SK-N-SH (cell line): ENCODE measurements at regions of chr1 and their contacts with region 1.

Region 1: DNA sequence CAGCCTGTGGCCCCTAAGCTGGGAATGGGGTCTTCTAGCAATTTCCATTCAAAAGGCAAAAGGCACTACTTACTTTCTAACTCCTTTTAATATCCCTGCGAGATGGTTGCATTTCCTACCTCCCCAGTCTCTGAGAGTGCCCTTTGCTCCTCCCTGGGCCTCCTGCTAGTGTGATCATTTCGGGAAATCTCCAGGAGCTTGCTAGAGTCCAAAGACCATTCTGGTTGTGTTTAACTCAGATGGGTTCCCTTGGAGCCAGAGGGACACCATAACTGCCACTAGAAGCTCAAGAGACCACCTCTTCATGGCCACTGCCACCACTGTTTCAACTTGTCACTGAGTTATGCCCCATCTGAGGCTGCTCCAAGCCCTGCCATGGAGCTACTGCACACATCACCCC is 34.4 kb upstream of the CYP4B1 start:
- DNase-seq: no peak
- H3K4me3 ChIP-seq: no peak overlapping the region
- H3K27ac ChIP-seq: no peak overlapping the region
- H3K4me1 ChIP-seq: no peaks in the 10 kb centered on the region
- H3K27me3 ChIP-seq: peaks cover under 1% of the 10 kb centered on the region; the same call in 1 of the 2 replicates
- CTCF ChIP-seq: no peak
- EP300 ChIP-seq: no peak
- RAD21 ChIP-seq: no peak

Region 2: GRCh38 chr1:46595127-46595526 is 169.3 kb before region 1 on chr1:
- CTCF ChIA-PET with region 1: no interaction called
- POLR2A ChIA-PET with region 1: no interaction called
- DNase-seq: no peak
- H3K4me3 ChIP-seq: no peak overlapping the region
- H3K27ac ChIP-seq: no peak overlapping the region
- H3K4me1 ChIP-seq: no peaks in the 10 kb centered on the region
- H3K27me3 ChIP-seq: no peaks in the 10 kb centered on the region
- CTCF ChIP-seq: no peak
- EP300 ChIP-seq: no peak
- RAD21 ChIP-seq: no peak

Region 3: DNA sequence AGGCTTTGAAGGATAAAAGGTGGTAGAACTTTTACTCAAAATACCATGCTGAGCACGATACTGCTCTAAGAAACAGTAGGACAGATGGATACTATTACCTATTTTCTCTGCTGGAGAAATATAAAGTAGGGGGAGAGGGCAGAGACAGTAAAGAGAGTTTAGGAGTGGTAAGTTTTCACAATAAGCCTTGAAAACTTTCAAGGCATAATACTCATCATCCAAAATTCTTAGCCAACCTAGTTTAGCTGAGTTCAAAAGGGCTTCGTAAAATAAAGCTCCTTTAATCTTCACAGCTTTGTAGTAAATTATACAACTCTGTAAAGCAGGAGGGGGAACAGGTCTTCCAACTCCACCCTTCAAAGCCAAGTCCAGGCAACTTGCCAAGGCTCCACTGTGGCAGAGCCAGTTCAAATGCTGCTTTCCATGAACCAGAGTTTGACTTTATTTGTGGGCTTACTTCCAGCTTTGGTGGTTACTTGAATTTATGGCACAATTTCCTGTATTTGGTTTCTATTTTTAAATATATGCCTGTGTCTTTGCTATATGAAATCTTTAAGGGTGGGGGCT is 77.2 kb before region 1 on chr1:
- CTCF ChIA-PET with region 1: no interaction called
- POLR2A ChIA-PET with region 1: no interaction called
- DNase-seq: no peak
- H3K4me3 ChIP-seq: no peak overlapping the region
- H3K27ac ChIP-seq: peak overlapping the region; percentile 15 to 16; a peak in 3 of 4 replicates
- H3K4me1 ChIP-seq: peaks cover 2 to 41% of the 10 kb centered on the region in 2 experiments
- H3K27me3 ChIP-seq: no peaks in the 10 kb centered on the region
- CTCF ChIP-seq: no peak
- EP300 ChIP-seq: no peak
- RAD21 ChIP-seq: no peak

Region 4: GRCh38 chr1:46724991-46725735 is 39.2 kb before region 1 on chr1:
- CTCF ChIA-PET with region 1: no interaction called
- POLR2A ChIA-PET with region 1: no interaction called
- DNase-seq: peak; percentile 65
- H3K4me3 ChIP-seq: no peak overlapping the region; a peak in 1 of 4 replicates
- H3K27ac ChIP-seq: no peak overlapping the region
- H3K4me1 ChIP-seq: no peaks in the 10 kb centered on the region; a peak in 1 of 4 replicates
- H3K27me3 ChIP-seq: no peaks in the 10 kb centered on the region; the same call in 1 of the 2 replicates
- CTCF ChIP-seq: peak; percentile 84
- EP300 ChIP-seq: no peak
- RAD21 ChIP-seq: peak; percentile 85

Region 5: DNA sequence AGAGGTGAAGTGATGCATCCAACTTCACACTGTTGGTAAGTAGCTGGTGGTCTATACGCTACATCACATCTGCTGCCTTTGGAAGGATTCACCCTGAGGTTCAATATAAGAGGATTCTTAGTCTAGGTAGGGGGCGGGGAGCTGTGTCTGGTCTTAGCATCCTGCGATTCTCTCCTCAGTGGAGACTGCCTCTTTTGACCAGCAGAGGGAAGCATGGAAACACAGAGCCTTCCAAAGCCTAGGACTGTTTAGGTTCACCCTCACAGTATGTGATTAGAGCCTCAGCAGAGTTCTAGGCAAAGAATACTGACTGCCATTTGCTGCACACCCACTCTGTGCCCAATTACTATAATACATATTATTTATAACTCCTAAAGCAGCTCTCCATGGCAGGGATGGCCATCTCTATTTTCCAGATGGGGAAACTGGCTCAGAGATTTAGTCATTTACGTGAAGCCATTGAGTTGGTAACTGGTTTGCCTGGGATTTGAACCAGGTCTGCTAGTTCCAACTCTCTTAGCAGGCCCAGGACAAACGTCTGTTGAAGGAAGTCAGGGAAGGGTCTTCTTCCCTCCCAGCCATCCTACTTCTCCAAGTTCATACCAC is 16.6 kb before region 1 on chr1:
- CTCF ChIA-PET with region 1: interaction called, 13 read pairs
- POLR2A ChIA-PET with region 1: no interaction called
- DNase-seq: peak; percentile 53
- H3K4me3 ChIP-seq: no peak overlapping the region
- H3K27ac ChIP-seq: no peak overlapping the region
- H3K4me1 ChIP-seq: no peaks in the 10 kb centered on the region
- H3K27me3 ChIP-seq: peaks cover 11% of the 10 kb centered on the region
- CTCF ChIP-seq: peak; percentile 65
- EP300 ChIP-seq: no peak
- RAD21 ChIP-seq: peak; percentile 69

Region 6: DNA sequence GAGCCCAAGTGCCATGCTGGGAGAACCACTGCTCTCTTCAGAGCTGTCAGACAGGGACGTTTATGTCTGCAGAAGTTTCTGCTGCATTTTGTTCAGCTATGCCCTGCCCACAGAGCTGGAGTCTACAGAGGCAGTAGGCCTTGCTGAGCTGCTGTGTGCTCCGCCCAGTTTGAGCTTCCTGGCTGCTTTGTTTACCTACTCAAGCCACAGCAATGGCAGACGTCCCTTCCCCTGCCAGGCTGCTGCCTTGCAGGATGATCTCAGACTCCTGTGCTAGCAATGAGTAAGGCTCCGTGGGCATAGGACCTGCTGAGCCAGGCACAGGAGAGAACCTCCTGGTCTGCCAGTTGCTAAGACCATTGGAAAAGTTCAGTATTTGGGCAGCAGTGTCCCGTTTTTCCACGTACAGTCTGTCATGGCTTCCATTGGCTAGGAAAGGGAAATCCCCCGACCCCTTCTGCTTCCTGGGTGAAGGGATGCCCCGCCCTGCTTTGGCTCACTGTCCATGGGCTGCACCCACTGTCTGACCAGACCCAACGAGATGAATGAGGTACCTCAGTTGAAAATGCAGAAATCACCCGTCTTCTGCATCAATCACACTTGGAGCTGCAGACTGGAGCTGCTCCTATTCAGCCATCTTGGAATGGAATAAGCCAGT is 66.4 kb after region 1 on chr1:
- CTCF ChIA-PET with region 1: no interaction called
- POLR2A ChIA-PET with region 1: no interaction called
- DNase-seq: no peak
- H3K4me3 ChIP-seq: no peak overlapping the region
- H3K27ac ChIP-seq: no peak overlapping the region
- H3K4me1 ChIP-seq: no peaks in the 10 kb centered on the region
- H3K27me3 ChIP-seq: no peaks in the 10 kb centered on the region; the same call in 1 of the 2 replicates
- CTCF ChIP-seq: no peak
- EP300 ChIP-seq: no peak
- RAD21 ChIP-seq: no peak